ENCODE measurements at regions of chr6 and their contacts with region 1.

Region 1: GRCh38 chr6:28683944-28684538 is 158.4 kb downstream of the GPX5 start:
- DNase-seq: peak; percentile 35 to 59
- ATAC-seq: peak; percentile 84 to 85
- H3K4me3 ChIP-seq: peak overlapping the region; percentile 19; the same call in 1 of the 3 replicates
- H3K27ac ChIP-seq: 0 out of 6 replicates have a peak overlapping the region, but pooled peaks of 1 of the 2 experiments have one; percentile 5
- H3K4me1 ChIP-seq: 0 out of 3 replicates have a peak, but pooled peaks cover 3% of the 10 kb centered on the region
- CTCF ChIP-seq: peak; percentile 69
- EP300 ChIP-seq: no peak
- POLR2A ChIP-seq: no peak
- RAD21 ChIP-seq: peak; percentile 82 to 92

Region 2: GRCh38 chr6:28371706-28372451 is 312.2 kb before region 1 on chr6:
- CTCF ChIA-PET with region 1: no interaction called
- POLR2A ChIA-PET with region 1: no interaction called
- DNase-seq: no peak
- ATAC-seq: no peak
- H3K4me3 ChIP-seq: no peak overlapping the region
- H3K27ac ChIP-seq: no peak overlapping the region
- H3K4me1 ChIP-seq: no peaks in the 10 kb centered on the region
- CTCF ChIP-seq: no peak
- EP300 ChIP-seq: no peak
- POLR2A ChIP-seq: no peak
- RAD21 ChIP-seq: no peak

Region 3: GRCh38 chr6:28673800-28674671 is 10.0 kb before region 1 on chr6:
- CTCF ChIA-PET with region 1: interaction called, 16 read pairs
- POLR2A ChIA-PET with region 1: no interaction called
- DNase-seq: peak; percentile 34 to 79
- ATAC-seq: peak; percentile 94 to 95
- H3K4me3 ChIP-seq: peak overlapping the region; percentile 62
- H3K27ac ChIP-seq: peak overlapping the region; percentile 17 to 38; a peak in 3 of 6 replicates
- H3K4me1 ChIP-seq: no peaks in the 10 kb centered on the region
- CTCF ChIP-seq: no peak
- EP300 ChIP-seq: no peak
- POLR2A ChIP-seq: no peak
- RAD21 ChIP-seq: no peak

Region 4: GRCh38 chr6:28907394-28907793 is 223.4 kb after region 1 on chr6:
- CTCF ChIA-PET with region 1: no interaction called
- POLR2A ChIA-PET with region 1: no interaction called
- DNase-seq: no peak
- ATAC-seq: no peak
- H3K4me3 ChIP-seq: no peak overlapping the region
- H3K27ac ChIP-seq: no peak overlapping the region
- H3K4me1 ChIP-seq: no peaks in the 10 kb centered on the region
- CTCF ChIP-seq: no peak
- EP300 ChIP-seq: no peak
- POLR2A ChIP-seq: no peak
- RAD21 ChIP-seq: no peak

Measured in A549 (cell line).